ENCODE measurements at regions of chr17 and their contacts with region 1.

Region 1: GRCh38 chr17:58006924-58007780 is at the start of gene SRSF1:
- DNase-seq: peak; percentile 89
- ATAC-seq: peak; percentile 93
- H3K4me3 ChIP-seq: peak within 1 kb of the TSS; percentile 83 to 94
- H3K27ac ChIP-seq: peak within 1 kb of the TSS; percentile 100
- H3K4me1 ChIP-seq: peaks cover 32% of the 10 kb centered on the region
- H3K27me3 ChIP-seq: no peaks in the 10 kb centered on the region
- CTCF ChIP-seq: no peak
- total RNA-seq, gene SRSF1: 362 TPM

Region 2: DNA sequence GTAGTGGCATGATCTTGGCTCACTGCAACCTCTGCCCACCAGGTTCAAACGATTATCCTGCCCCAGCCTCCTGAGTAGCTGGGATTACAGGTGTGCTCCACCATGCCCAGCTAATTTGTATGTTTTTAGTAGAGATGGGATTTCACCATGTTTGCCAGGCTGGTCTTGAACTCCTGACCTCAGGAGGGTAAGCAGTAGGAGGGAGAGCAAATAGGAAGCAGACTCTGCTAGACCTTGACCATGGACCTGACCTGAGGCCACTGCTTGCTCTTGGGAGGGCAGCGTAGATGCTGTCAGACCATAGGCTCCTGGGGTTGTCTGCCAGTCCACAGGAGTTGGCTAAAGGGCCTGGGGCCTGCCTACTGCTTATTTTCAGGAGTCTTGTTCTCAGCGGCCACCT is 893.5 kb before region 1 on chr17:
- CTCF ChIA-PET with region 1: no interaction called
- POLR2A ChIA-PET with region 1: interaction called, 12 read pairs
- in situ Hi-C with region 1: no loop called
- intact Hi-C with region 1: no loop called
- DNase-seq: no peak
- ATAC-seq: peak; percentile 25; the same call in 1 of the 2 replicates
- H3K4me3 ChIP-seq: no peak overlapping the region
- H3K27ac ChIP-seq: no peak overlapping the region
- H3K4me1 ChIP-seq: peaks cover 14% of the 10 kb centered on the region
- H3K27me3 ChIP-seq: no peaks in the 10 kb centered on the region
- CTCF ChIP-seq: no peak

Region 3: DNA sequence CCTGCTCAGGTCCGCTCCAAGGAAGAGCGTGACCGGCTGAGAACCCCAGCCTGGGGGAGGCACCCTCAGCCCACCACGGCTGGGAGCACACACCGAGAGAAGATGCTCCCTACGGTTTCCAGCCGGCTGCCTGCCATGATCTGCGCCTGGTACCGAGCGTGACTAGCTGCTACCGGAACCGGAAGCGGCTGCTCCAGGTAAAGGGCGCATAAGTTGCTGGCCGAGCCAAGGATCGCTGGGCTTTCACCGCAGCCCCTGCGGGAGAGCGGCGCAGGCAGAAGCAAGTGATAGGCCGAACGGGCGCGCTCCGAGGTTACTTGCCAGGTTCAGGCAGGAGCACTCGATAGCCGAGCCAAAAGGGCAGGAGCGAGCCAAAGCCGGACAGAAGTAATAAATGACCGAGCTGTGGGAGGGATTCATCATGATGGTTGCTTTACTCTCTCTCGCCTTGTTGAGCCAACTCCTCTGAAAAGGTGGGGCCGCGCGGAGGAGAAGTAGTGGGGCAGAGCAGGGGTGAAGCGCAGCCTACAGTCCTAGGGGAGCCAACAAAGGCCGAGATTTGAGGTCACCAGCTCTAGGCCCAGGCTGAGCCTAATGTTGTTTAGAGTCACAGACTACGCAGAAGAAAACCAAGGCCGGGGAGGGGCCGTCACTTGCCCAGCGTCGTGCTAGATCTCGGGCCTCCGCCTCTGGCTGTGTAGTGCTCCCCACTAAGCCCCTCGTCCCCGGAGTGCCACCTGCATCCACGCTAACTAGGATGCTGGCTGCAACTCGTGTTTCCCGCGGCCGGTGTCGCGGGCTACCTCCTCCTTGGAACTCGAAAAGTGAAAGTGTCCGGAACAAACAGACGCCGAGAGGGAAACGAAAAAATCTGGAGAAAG is 157.0 kb before region 1 on chr17 and contains the start of gene MRPS23:
- CTCF ChIA-PET with region 1: no interaction called
- POLR2A ChIA-PET with region 1: interaction called, 13 read pairs
- in situ Hi-C with region 1: no loop called
- intact Hi-C with region 1: no loop called
- DNase-seq: peak; percentile 83
- ATAC-seq: peak; percentile 96
- H3K4me3 ChIP-seq: peak within 1 kb of the TSS; percentile 99
- H3K27ac ChIP-seq: peak within 1 kb of the TSS; percentile 99
- H3K4me1 ChIP-seq: peaks cover 25% of the 10 kb centered on the region
- H3K27me3 ChIP-seq: no peaks in the 10 kb centered on the region
- CTCF ChIP-seq: no peak
- total RNA-seq, gene MRPS23: 85.4 TPM

Region 4: DNA sequence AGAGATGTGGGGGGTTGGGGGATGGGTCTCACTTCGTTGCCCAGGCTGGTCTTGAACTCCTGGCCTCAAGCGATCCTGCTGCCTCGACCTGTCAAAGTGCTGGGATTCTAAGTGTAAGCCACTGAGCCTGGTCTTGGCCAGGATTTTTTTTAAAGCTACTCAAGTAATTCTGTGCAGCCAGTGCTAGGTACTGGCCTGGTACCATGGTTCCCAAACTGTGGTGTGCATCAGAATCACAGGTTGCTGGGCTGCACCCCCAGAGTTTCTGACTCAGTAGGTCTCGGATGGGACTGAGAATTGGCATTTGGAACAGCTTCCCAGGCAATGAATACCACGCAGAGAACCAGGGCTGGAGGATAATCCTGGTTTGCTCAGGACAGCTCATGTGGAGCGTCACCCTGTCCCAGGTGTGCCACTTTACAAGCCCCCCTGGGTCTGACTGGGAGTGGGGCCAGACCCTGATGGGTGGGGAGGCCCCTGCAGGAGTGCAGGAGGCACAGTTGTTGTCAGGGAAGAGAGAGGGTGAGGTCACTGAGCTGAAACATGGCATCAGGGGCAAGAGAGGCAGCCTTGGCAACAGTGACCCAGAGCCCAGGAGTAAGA is 146.7 kb before region 1 on chr17:
- CTCF ChIA-PET with region 1: interaction called, 7 read pairs
- POLR2A ChIA-PET with region 1: interaction called, 11 read pairs
- in situ Hi-C with region 1: no loop called
- intact Hi-C with region 1: no loop called
- DNase-seq: no peak
- ATAC-seq: peak; percentile 6
- H3K4me3 ChIP-seq: peak overlapping the region in 1 of 2 experiments; percentile 56; a peak in 1 of 4 replicates
- H3K27ac ChIP-seq: peak overlapping the region; percentile 89
- H3K4me1 ChIP-seq: peaks cover 56% of the 10 kb centered on the region
- H3K27me3 ChIP-seq: no peaks in the 10 kb centered on the region
- CTCF ChIP-seq: no peak

Region 5: DNA sequence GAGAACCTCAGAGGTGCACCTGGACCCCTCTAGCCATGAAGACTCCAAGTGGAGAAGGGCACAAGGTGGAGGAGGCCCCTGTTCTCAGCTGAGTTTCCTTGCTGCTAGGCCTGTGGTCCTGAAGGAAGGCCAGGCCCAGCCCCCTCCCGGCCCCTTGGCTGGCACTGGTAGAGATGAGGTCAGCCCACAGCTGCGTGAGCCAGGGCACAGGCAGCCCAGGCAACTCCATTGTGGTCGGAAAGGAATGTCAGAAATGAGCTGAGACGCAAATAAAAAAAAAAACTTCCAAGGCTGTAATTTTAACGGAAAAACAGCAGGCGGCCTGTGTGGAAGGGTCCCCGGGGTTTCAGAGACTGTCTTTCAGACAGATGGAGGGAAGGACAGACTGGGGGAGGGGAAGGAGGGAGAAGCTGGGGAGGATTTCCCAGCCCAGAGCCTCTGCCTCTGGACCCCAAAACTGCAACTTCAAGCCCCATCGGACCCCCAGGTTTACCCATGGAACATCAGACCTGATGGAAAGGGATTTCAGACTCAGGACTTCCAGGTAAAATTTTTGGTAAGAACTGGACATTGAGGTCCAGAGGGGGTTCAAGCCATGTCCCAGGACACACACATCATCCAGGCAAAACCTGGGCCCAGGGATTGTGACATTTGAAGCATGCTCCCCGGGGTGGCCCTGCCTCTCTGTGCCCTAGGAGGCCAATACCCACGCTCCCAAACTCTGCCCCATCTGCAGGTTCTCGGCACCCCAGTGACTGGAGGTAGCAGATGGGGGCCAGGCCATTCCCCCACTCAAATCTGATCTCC is 131.6 kb before region 1 on chr17:
- CTCF ChIA-PET with region 1: no interaction called
- POLR2A ChIA-PET with region 1: interaction called, 17 read pairs
- in situ Hi-C with region 1: no loop called
- intact Hi-C with region 1: no loop called
- DNase-seq: peak; percentile 47
- ATAC-seq: peak; percentile 90
- H3K4me3 ChIP-seq: no peak overlapping the region
- H3K27ac ChIP-seq: peak overlapping the region; percentile 95
- H3K4me1 ChIP-seq: peaks cover 73% of the 10 kb centered on the region
- H3K27me3 ChIP-seq: no peaks in the 10 kb centered on the region
- CTCF ChIP-seq: no peak

Region 6: GRCh38 chr17:57889892-57890856 is 117.0 kb before region 1 on chr17:
- CTCF ChIA-PET with region 1: no interaction called
- POLR2A ChIA-PET with region 1: no interaction called
- in situ Hi-C with region 1: no loop called
- intact Hi-C with region 1: no loop called
- DNase-seq: no peak
- ATAC-seq: peak; percentile 72
- H3K4me3 ChIP-seq: no peak overlapping the region
- H3K27ac ChIP-seq: peak overlapping the region; percentile 94
- H3K4me1 ChIP-seq: peaks cover 63% of the 10 kb centered on the region
- H3K27me3 ChIP-seq: no peaks in the 10 kb centered on the region
- CTCF ChIP-seq: no peak

Region 7: GRCh38 chr17:58082870-58083490 is 75.8 kb after region 1 on chr17 and contains the start of gene DYNLL2:
- CTCF ChIA-PET with region 1: no interaction called
- POLR2A ChIA-PET with region 1: interaction called, 8 read pairs
- in situ Hi-C with region 1: no loop called
- intact Hi-C with region 1: loop called (anchors 5 kb)
- DNase-seq: peak; percentile 4
- ATAC-seq: peak; percentile 93
- H3K4me3 ChIP-seq: peak within 1 kb of the TSS; percentile 77 to 87
- H3K27ac ChIP-seq: peak within 1 kb of the TSS; percentile 96
- H3K4me1 ChIP-seq: peaks cover 16% of the 10 kb centered on the region
- H3K27me3 ChIP-seq: peaks cover 9% of the 10 kb centered on the region
- CTCF ChIP-seq: no peak
- total RNA-seq, gene DYNLL2: 19.8 TPM

Region 8: GRCh38 chr17:58112970-58113631 is 105.9 kb after region 1 on chr17:
- CTCF ChIA-PET with region 1: interaction called, 3 read pairs
- POLR2A ChIA-PET with region 1: interaction called, 5 read pairs
- in situ Hi-C with region 1: no loop called
- intact Hi-C with region 1: loop called (anchors 5 kb)
- DNase-seq: peak; percentile 70
- ATAC-seq: peak; percentile 88
- H3K4me3 ChIP-seq: no peak overlapping the region
- H3K27ac ChIP-seq: no peak overlapping the region
- H3K4me1 ChIP-seq: no peaks in the 10 kb centered on the region
- H3K27me3 ChIP-seq: no peaks in the 10 kb centered on the region
- CTCF ChIP-seq: peak; percentile 97

Measured in Panc1 (cell line).